Vagina (tissue), 2 donors: ENCODE measurements at regions of chr7 and their contacts with region 1.

Region 1: GRCh38 chr7:151519765-151520418 is at the start of gene RHEB:
- DNase-seq: peak; percentile 99
- H3K4me3 ChIP-seq: peak within 1 kb of the TSS; percentile 77 to 91
- H3K27ac ChIP-seq: peak within 1 kb of the TSS; percentile 98
- H3K4me1 ChIP-seq: peaks cover 43% of the 10 kb centered on the region
- H3K27me3 ChIP-seq: no peaks in the 10 kb centered on the region
- CTCF ChIP-seq: no peak
- POLR2A ChIP-seq: peak in 1 of 2 donors; percentile 26
- total RNA-seq, gene RHEB: 74.2 TPM

Region 2: GRCh38 chr7:151459726-151460473 is 60.0 kb before region 1 on chr7:
- intact Hi-C with region 1: loop called (anchors 2 kb)
- DNase-seq: peak in 1 of 2 donors; percentile 100
- H3K4me3 ChIP-seq: peak overlapping the region; percentile 1 to 31
- H3K27ac ChIP-seq: peak overlapping the region; percentile 83
- H3K4me1 ChIP-seq: peaks cover 27% of the 10 kb centered on the region
- H3K27me3 ChIP-seq: no peaks in the 10 kb centered on the region
- CTCF ChIP-seq: peak in 1 of 3 experiments; percentile 41
- POLR2A ChIP-seq: no peak

Region 3: DNA sequence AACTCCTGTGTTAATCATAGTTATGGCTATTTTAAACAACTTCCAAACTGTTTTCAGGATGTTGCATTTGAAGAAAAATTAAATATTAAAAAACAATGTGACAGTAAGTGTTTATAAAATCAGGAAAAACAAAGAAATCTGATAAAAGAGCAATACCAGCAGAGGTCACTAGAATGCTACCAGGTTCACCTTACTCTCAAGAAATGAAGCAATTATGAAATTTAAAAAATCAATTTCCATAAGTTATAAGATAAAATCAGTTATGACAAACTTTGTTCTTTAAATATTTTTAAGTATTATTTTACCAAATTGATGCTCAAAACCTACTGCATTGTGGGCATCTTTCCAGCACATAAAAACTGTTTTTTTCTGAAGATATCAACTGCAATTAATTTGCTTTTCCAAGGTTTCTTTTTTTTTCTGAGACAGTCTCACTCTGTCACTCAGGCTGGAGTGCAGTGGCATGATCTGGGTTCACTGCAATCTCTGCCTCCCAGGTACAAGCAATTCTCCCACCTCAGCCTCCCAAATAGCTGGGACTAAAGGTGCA is 50.5 kb after region 1 on chr7:
- intact Hi-C with region 1: no loop called
- DNase-seq: no peak
- H3K4me3 ChIP-seq: no peak overlapping the region
- H3K27ac ChIP-seq: no peak overlapping the region
- H3K4me1 ChIP-seq: peaks cover 18% of the 10 kb centered on the region
- H3K27me3 ChIP-seq: no peaks in the 10 kb centered on the region
- CTCF ChIP-seq: peak in 1 of 3 experiments; percentile 15
- POLR2A ChIP-seq: no peak

Region 4: GRCh38 chr7:151631968-151632749 is 112.3 kb after region 1 on chr7:
- intact Hi-C with region 1: loop called (anchors 2 kb)
- DNase-seq: no peak
- H3K4me3 ChIP-seq: peak overlapping the region; percentile 62 to 84
- H3K27ac ChIP-seq: peak overlapping the region; percentile 94
- H3K4me1 ChIP-seq: peaks cover 32% of the 10 kb centered on the region
- H3K27me3 ChIP-seq: no peaks in the 10 kb centered on the region
- CTCF ChIP-seq: peak in 1 of 3 experiments; percentile 55
- POLR2A ChIP-seq: no peak

Region 5: GRCh38 chr7:151954866-151955820 is 435.3 kb after region 1 on chr7:
- intact Hi-C with region 1: no loop called
- DNase-seq: peak in 1 of 2 donors; percentile 92
- H3K4me3 ChIP-seq: peak overlapping the region; percentile 6 to 24
- H3K27ac ChIP-seq: peak overlapping the region; percentile 58
- H3K4me1 ChIP-seq: peaks cover 6% of the 10 kb centered on the region
- H3K27me3 ChIP-seq: peaks cover 2% of the 10 kb centered on the region
- CTCF ChIP-seq: no peak
- POLR2A ChIP-seq: no peak